GM13977 (cell line): ENCODE measurements at regions of chr3 and their contacts with region 1.

Region 1: GRCh38 chr3:5136211-5136918 is 14.3 kb downstream of the ARL8B start:
- DNase-seq: peak; percentile 54
- CTCF ChIP-seq: peak; percentile 59

Region 2: GRCh38 chr3:5194341-5195159 is 58.2 kb after region 1 on chr3:
- in situ Hi-C with region 1: loop called (anchors 10 kb)
- DNase-seq: peak; percentile 24
- CTCF ChIP-seq: no peak

Region 3: DNA sequence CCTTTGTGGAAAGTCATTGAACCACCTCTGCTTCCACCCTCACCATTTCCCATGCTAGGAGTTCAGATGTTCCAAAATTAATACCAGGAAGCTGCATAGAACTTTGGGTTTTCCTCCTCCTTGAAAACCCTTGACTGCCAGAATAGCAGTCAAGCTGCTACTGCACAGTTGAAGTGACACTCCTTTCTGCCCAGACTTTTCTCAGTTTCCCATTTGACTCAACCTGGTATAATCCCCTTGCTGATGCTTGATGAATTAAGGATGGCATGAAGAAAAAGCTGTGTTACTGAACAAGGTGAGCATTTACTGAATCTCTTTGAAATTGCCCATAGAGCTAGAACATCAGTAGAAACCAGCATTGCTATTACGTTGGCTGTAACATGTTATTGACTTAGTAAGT is 337.1 kb after region 1 on chr3:
- in situ Hi-C with region 1: no loop called
- DNase-seq: no peak
- CTCF ChIP-seq: no peak